ENCODE measurements at regions of chr4 and their contacts with region 1.

Region 1: GRCh38 chr4:93764639-93765246 is 63.8 kb upstream of the ATOH1 start:
- DNase-seq: peak; percentile 44
- ATAC-seq: peak; percentile 79
- H3K4me3 ChIP-seq: no peak overlapping the region
- H3K27ac ChIP-seq: no peak overlapping the region
- H3K4me1 ChIP-seq: no peaks in the 10 kb centered on the region
- H3K27me3 ChIP-seq: 0 out of 2 replicates have a peak, but pooled peaks cover 3% of the 10 kb centered on the region
- CTCF ChIP-seq: peak; percentile 92
- POLR2A ChIP-seq: 0 out of 2 replicates have a peak, but pooled peaks have one; percentile 24
- RAD21 ChIP-seq: peak; percentile 95

Region 2: DNA sequence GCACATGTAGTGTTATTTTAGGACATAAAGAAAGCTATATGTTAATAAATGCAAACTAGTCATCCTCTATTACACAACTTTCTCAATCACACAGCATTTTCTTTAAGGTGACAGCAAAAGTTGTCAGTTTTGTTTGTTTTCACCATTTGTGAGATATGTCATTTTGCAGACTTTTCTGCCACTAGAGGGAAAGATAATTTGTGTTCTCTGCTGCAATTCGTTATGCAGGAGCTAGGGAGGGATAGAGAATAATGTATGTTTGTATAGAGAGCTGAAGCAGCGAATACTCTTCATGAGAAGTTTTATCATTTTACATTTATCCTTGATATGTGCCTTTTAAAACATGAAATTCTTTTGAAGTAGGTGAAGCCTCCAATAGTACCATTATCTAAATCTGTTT is 606.7 kb before region 1 on chr4:
- CTCF ChIA-PET with region 1: no interaction called
- POLR2A ChIA-PET with region 1: no interaction called
- dilution Hi-C with region 1: no loop called
- in situ Hi-C with region 1: no loop called
- intact Hi-C with region 1: loop called (anchors 2 kb)
- DNase-seq: peak; percentile 1
- ATAC-seq: no peak
- H3K4me3 ChIP-seq: no peak overlapping the region
- H3K27ac ChIP-seq: no peak overlapping the region
- H3K4me1 ChIP-seq: no peaks in the 10 kb centered on the region
- H3K27me3 ChIP-seq: no peaks in the 10 kb centered on the region
- CTCF ChIP-seq: peak; percentile 36
- POLR2A ChIP-seq: no peak
- RAD21 ChIP-seq: no peak; the same call in 1 of the 2 replicates

Region 3: GRCh38 chr4:93199492-93199891 is 565.3 kb before region 1 on chr4:
- CTCF ChIA-PET with region 1: interaction called, 3 read pairs
- POLR2A ChIA-PET with region 1: no interaction called
- dilution Hi-C with region 1: no loop called
- in situ Hi-C with region 1: no loop called
- intact Hi-C with region 1: loop called (anchors 1 kb)
- DNase-seq: peak; percentile 29
- ATAC-seq: peak; percentile 89
- H3K4me3 ChIP-seq: no peak overlapping the region
- H3K27ac ChIP-seq: no peak overlapping the region
- H3K4me1 ChIP-seq: no peaks in the 10 kb centered on the region
- H3K27me3 ChIP-seq: no peaks in the 10 kb centered on the region; the same call in 1 of the 2 replicates
- CTCF ChIP-seq: peak; percentile 55
- POLR2A ChIP-seq: no peak
- RAD21 ChIP-seq: peak; percentile 58